Naive thymus-derived CD4-positive, alpha-beta T cell (primary cell): ENCODE measurements at regions of chr1 and their contacts with region 1.

Region 1: DNA sequence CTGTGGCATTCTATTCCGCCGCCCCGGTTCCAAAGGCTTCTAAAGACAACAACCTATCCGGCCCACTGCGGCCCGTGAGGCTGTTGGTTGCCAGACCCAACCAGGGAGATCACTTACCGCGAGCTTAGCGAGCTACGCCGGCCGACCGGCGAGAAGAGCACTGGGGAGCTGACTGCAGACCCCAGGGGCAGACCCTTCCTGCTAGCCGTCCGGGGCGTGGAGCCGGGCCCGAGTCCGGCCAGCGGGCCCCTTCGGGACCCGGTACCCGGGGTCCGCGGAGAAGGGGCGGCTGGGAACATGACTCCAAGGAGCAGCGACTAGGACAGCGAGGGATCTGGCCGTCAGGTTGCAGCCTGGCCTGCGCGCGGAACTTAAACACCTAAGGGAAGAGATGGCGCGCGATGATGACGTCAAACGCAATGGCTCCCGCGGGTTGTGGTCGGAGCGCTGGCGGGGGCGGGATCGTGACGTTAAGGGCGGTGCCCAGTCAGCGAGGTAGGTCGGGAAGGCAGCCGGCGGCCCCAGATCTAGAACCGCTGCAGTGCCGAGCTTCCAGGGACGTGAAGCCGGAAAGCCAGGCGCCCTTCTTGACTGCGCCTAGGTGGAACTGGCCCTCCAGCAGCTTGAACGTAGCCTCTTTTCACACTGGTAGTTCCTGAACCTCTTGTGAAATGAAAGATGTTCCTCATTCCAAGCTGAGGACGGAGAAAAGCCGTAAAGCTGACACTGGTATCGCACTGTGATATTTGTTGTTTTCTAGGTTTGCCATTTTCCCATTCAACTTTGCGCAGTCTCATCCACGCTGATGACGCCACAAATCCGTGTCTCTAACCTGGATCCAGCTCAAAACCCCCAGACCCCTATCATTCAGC is at the start of gene NUP133:
- DNase-seq: peak; percentile 93 to 97 (median 97)
- ATAC-seq: peak; percentile 98
- H3K4me3 ChIP-seq: peak within 1 kb of the TSS; percentile 91
- H3K4me3 Mint-ChIP-seq: peak within 1 kb of the TSS; percentile 90 to 98 (median 92)
- H3K27ac ChIP-seq: peak within 1 kb of the TSS; percentile 95
- H3K27ac Mint-ChIP-seq: peak within 1 kb of the TSS; percentile 95 to 99 (median 99)
- H3K4me1 ChIP-seq: peaks cover 4 to 13% of the 10 kb centered on the region in 2 donors
- H3K4me1 Mint-ChIP-seq: peaks cover 10 to 47% (median 38%) of the 10 kb centered on the region in 7 donors
- H3K27me3 ChIP-seq: no peaks in the 10 kb centered on the region
- H3K27me3 Mint-ChIP-seq: peaks cover 0 to 5% (median 2%) of the 10 kb centered on the region in 5 donors
- total RNA-seq, gene NUP133: 24.3 to 45.8 (median 40.4) TPM

Region 2: GRCh38 chr1:228102791-228103620 is 1405.2 kb before region 1 on chr1 and contains the start of gene C1orf35:
- CTCF ChIA-PET with region 1: no interaction called
- POLR2A ChIA-PET with region 1: no interaction called
- intact Hi-C with region 1: loop called in 1 of 2 experiments (anchors 2 kb)
- DNase-seq: peak; percentile 90 to 97 (median 93)
- ATAC-seq: peak; percentile 85
- H3K4me3 ChIP-seq: peak within 1 kb of the TSS; percentile 95
- H3K4me3 Mint-ChIP-seq: peak within 1 kb of the TSS; percentile 91 to 97 (median 93)
- H3K27ac ChIP-seq: peak within 1 kb of the TSS; percentile 94
- H3K27ac Mint-ChIP-seq: peak within 1 kb of the TSS; percentile 90 to 95 (median 94)
- H3K4me1 ChIP-seq: peaks cover 17 to 20% of the 10 kb centered on the region in 2 donors
- H3K4me1 Mint-ChIP-seq: peaks cover 6 to 43% (median 23%) of the 10 kb centered on the region in 7 donors
- H3K27me3 ChIP-seq: no peaks in the 10 kb centered on the region
- H3K27me3 Mint-ChIP-seq: no peaks in the 10 kb centered on the region
- total RNA-seq, gene C1orf35: 16.8 to 31.8 (median 27.8) TPM

Region 3: GRCh38 chr1:229325853-229326502 is 182.2 kb before region 1 on chr1:
- CTCF ChIA-PET with region 1: no interaction called
- POLR2A ChIA-PET with region 1: no interaction called
- intact Hi-C with region 1: loop called in 1 of 2 experiments (anchors 5 kb)
- DNase-seq: peak in 4 of 9 donors; percentile 7 to 30 (median 10)
- ATAC-seq: no peak
- H3K4me3 ChIP-seq: no peak overlapping the region
- H3K4me3 Mint-ChIP-seq: peak overlapping the region in 8 of 10 donors; percentile 51 to 81 (median 75)
- H3K27ac ChIP-seq: peak overlapping the region; percentile 29
- H3K27ac Mint-ChIP-seq: peak overlapping the region in 8 of 9 donors; percentile 64 to 96 (median 92)
- H3K4me1 ChIP-seq: no peaks in the 10 kb centered on the region
- H3K4me1 Mint-ChIP-seq: peaks cover 0 to 38% (median 16%) of the 10 kb centered on the region in 7 donors
- H3K27me3 ChIP-seq: no peaks in the 10 kb centered on the region
- H3K27me3 Mint-ChIP-seq: no peaks in the 10 kb centered on the region

Region 4: DNA sequence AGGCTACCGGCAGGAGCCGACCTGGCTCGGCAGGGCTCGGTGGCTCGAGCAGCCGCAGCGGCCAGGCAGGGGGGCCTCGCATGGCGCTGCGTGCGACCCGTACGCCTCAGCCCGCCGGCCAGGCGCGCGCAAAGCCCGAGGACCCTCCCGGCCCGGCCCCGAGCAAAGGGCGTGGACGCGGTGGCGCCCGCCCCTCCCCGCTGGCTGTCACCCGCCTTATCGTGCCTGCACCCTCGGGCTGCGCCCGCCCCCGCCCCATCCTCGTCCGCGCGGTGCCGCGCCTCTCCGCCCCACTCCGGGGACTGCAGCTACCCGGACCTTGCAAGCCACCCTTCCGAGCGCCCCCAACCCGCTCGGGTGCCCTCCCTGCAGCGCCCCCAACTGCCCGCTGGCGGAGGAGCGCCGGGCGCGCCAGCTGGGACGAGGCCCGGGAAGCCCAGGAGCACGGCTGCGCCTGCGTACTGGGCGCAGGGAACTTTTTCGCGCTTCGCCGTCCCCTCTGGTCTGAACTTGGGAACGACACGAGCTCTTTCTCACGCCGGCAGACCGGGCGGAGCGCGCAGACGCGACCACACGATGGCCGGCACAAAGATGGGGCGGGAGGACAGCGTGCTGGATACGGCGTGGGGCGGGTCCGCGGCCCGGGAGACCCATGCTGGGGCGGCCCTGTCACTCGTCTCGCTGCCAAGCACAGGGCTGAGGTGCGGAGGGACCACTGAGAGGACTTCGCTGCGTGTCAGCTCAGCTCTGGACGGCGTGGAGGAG is 50.6 kb after region 1 on chr1 and contains the start of gene ABCB10:
- CTCF ChIA-PET with region 1: no interaction called
- POLR2A ChIA-PET with region 1: interaction called, 12 read pairs
- intact Hi-C with region 1: loop called (anchors 1 kb)
- DNase-seq: peak; percentile 68 to 96 (median 80)
- ATAC-seq: peak; percentile 85
- H3K4me3 ChIP-seq: peak within 1 kb of the TSS; percentile 88
- H3K4me3 Mint-ChIP-seq: peak within 1 kb of the TSS; percentile 91 to 97 (median 95)
- H3K27ac ChIP-seq: peak within 1 kb of the TSS; percentile 65
- H3K27ac Mint-ChIP-seq: peak within 1 kb of the TSS; percentile 64 to 92 (median 87)
- H3K4me1 ChIP-seq: peaks cover 15 to 16% of the 10 kb centered on the region in 2 donors
- H3K4me1 Mint-ChIP-seq: peaks cover 37 to 46% (median 41%) of the 10 kb centered on the region in 7 donors
- H3K27me3 ChIP-seq: no peaks in the 10 kb centered on the region
- H3K27me3 Mint-ChIP-seq: peaks cover 0 to 6% (median 0%) of the 10 kb centered on the region in 5 donors
- total RNA-seq, gene ABCB10: 14.1 to 31.9 (median 18.4) TPM

Region 5: GRCh38 chr1:229625915-229626831 is 118.0 kb after region 1 on chr1 and contains the starts of genes TAF5L and URB2:
- CTCF ChIA-PET with region 1: no interaction called
- POLR2A ChIA-PET with region 1: no interaction called
- intact Hi-C with region 1: loop called (anchors 1 kb)
- DNase-seq: peak; percentile 81 to 91 (median 85)
- ATAC-seq: peak; percentile 97
- H3K4me3 ChIP-seq: peak within 1 kb of the TSS; percentile 93
- H3K4me3 Mint-ChIP-seq: peak within 1 kb of the TSS; percentile 94 to 100 (median 98)
- H3K27ac ChIP-seq: peak within 1 kb of the TSS; percentile 80
- H3K27ac Mint-ChIP-seq: peak within 1 kb of the TSS; percentile 93 to 98 (median 97)
- H3K4me1 ChIP-seq: peaks cover 21 to 27% of the 10 kb centered on the region in 2 donors
- H3K4me1 Mint-ChIP-seq: peaks cover 39 to 69% (median 59%) of the 10 kb centered on the region in 7 donors
- H3K27me3 ChIP-seq: no peaks in the 10 kb centered on the region
- H3K27me3 Mint-ChIP-seq: no peaks in the 10 kb centered on the region
- total RNA-seq, gene TAF5L: 17.3 to 27.2 (median 19.8) TPM
- total RNA-seq, gene URB2: 6.2 to 18.2 (median 11.0) TPM

Region 6: DNA sequence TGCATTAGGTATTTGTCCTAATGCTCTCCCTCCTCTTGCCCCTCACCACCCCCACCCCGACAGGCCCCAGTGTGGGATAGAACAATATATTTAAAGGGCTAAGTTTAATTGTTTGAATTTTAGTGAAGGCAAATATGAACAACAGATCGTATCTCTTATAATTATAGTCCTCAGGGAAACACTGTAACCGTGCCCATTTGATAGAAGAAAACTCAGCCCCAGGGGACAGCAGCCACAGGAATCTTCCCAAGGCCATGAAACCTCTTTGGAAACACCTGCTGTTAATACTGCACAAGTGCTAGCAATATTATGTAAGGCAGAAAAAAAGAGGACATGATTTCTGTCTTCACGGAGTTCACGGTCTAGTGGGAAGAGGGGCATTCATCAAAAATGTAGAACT is 260.0 kb after region 1 on chr1:
- CTCF ChIA-PET with region 1: no interaction called
- POLR2A ChIA-PET with region 1: no interaction called
- intact Hi-C with region 1: no loop called
- DNase-seq: no peak
- ATAC-seq: no peak
- H3K4me3 ChIP-seq: no peak overlapping the region
- H3K4me3 Mint-ChIP-seq: no peak overlapping the region
- H3K27ac ChIP-seq: no peak overlapping the region
- H3K27ac Mint-ChIP-seq: no peak overlapping the region
- H3K4me1 ChIP-seq: no peaks in the 10 kb centered on the region
- H3K4me1 Mint-ChIP-seq: no peaks in the 10 kb centered on the region
- H3K27me3 ChIP-seq: no peaks in the 10 kb centered on the region
- H3K27me3 Mint-ChIP-seq: peaks cover 18 to 38% (median 22%) of the 10 kb centered on the region in 5 donors